GM10248 (cell line): ENCODE measurements at regions of chr1 and their contacts with region 1.

Region 1: DNA sequence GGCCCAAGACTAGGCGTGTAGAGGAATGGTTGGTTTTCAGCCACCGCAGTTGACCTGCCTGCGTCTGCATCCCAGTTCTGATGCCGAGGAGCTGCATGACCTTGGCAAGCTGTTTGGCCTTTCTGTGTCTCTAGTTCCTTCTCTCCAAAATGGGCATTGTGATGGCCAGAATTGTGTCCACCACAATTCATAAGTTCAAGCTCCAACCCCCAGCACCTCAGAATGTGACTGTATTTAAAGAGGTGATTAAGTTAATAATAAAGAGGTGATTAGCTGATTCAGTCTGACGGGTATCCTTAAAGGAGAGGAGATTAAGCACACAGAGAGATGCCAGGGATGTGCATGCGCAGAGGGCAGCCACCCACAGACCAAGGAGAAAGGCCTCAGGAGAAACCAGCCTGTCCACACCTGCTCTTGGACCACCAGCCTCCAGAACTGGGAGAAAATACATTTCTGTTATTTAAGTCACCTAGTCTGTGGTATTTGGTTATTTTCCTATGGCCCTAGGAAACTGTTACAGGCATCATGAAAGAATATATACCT is 28.5 kb downstream of the MAB21L3 start:
- DNase-seq: no peak
- CTCF ChIP-seq: no peak

Region 2: DNA sequence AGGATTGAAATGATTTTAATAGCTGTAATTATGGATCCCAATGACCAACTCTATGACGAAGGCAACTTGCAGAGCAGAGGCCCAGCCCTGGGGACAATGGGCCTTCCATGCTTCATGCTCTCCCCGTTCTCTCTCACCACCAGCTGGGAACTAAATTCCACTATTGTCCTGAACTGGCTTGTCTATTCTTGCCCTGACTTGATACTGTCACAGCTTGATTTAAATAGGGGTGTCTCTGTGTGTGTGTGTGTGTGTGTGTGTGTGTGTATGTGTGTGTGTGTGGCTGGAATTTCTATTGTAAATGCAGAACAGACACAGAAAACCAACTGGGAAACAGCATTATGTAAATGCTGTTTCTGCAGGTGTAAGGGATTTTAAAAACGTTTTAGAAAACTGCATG is 106.3 kb before region 1 on chr1:
- CTCF ChIA-PET with region 1: no interaction called
- POLR2A ChIA-PET with region 1: no interaction called
- DNase-seq: no peak
- CTCF ChIP-seq: no peak

Region 3: DNA sequence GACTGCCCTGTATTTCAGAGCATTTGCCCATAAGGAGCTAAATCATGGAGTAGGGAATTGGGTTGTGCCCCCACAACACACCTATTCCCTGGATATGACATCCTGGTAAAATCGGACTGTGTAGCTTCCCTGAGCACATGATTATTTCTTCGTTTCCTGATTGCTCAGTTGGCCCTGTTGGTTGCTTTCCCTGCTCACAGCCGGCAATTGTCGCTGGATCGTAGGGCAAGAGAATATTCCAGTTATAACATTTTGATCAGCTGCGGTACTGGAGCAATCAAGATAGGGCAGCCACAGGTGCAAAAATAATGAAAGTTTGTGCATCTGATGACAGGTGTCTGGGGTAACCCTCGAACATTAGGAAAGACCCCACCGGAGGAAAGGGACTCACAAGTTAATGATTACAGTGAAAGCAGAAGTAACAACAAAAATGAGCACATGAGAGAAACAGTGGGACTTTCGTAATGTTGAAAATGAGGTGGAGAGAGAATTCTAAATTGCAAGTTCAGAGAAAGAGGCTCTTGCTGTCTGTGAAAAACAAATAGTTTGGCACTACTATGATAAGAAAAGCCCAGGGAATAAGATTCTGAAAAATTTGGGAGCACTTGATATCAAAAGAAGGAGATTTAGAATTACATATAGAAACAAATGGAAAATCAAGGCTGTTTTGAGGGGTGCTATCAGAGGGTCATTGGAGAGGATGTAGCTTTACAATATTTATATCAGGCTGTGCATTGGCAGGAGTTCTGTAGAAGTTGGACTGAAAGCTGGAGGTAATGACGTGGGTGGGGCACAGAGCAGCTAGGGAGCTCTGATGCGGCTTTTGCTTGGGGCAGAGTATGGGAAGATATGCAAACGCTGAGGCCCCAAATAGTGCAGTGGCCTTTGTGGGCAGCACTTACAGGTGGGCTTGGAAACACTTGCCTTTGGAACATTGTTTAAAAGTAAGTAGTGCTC is 28.8 kb before region 1 on chr1 and contains the start of gene MAB21L3:
- CTCF ChIA-PET with region 1: interaction called, 18 read pairs
- POLR2A ChIA-PET with region 1: no interaction called
- DNase-seq: peak; percentile 61
- CTCF ChIP-seq: no peak

Region 4: GRCh38 chr1:116151739-116152576 is 12.3 kb after region 1 on chr1:
- CTCF ChIA-PET with region 1: interaction called, 131 read pairs
- POLR2A ChIA-PET with region 1: no interaction called
- DNase-seq: peak; percentile 93
- CTCF ChIP-seq: peak; percentile 97

Region 5: DNA sequence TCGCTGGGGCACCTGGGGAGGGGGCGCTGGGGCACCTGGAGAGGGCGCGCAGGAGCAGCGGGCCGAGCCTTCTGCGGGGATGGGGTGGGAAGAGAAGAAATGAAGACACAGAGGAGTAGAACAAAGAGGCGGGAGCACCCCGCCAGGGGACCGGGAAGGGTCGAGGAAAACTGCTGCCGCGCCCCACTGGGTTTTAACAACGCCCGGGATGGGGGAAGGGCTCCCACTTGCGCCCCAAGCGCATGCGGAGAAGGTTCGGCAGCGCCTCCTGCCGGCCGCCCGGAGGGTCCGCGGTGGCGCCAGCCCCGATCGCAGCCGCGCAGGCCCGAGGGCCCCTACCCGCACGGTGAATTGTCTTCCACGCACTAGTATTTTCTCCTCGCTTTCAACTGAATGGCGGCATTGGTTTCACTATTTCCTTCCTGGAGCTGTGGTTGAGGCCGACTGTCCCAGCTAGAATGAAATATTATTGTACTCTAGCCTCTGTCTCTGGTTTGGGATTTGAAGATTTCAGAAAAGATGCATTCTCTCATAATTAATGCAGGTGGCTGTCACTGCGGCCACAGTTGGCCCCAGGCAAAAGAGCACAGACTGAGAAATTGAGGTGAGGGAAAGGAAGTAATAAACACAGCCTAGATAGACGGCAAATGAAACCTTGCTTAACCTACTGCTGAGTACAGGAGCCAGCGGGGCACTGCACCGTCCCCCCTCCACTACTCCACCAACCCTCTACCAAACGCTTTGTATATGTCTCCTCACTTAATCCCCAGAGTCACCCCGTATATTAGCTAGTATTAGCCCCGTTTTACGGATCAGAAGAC is 28.8 kb after region 1 on chr1:
- CTCF ChIA-PET with region 1: interaction called, 21 read pairs
- POLR2A ChIA-PET with region 1: no interaction called
- DNase-seq: peak; percentile 89
- CTCF ChIP-seq: peak; percentile 96

Region 6: GRCh38 chr1:116202934-116203723 is 63.5 kb after region 1 on chr1:
- CTCF ChIA-PET with region 1: no interaction called
- POLR2A ChIA-PET with region 1: no interaction called
- DNase-seq: no peak
- CTCF ChIP-seq: no peak

Region 7: GRCh38 chr1:116498789-116499628 is 359.3 kb after region 1 on chr1:
- CTCF ChIA-PET with region 1: interaction called, 193 read pairs
- POLR2A ChIA-PET with region 1: no interaction called
- DNase-seq: peak; percentile 70
- CTCF ChIP-seq: peak; percentile 75